Psoas muscle (tissue), 8 donors: ENCODE measurements at regions of chr1 and their contacts with region 1.

Region 1: GRCh38 chr1:160261893-160262794 is at the start of gene DCAF8:
- DNase-seq: peak; percentile 99
- ATAC-seq: peak; percentile 94 to 97 (median 95)
- H3K4me3 ChIP-seq: peak within 1 kb of the TSS; percentile 80
- H3K27ac ChIP-seq: peak within 1 kb of the TSS; percentile 99
- H3K4me1 ChIP-seq: peaks cover 39% of the 10 kb centered on the region
- H3K27me3 ChIP-seq: no peaks in the 10 kb centered on the region
- CTCF ChIP-seq: no peak
- total RNA-seq, gene DCAF8: 135 to 204 (median 188) TPM

Region 2: DNA sequence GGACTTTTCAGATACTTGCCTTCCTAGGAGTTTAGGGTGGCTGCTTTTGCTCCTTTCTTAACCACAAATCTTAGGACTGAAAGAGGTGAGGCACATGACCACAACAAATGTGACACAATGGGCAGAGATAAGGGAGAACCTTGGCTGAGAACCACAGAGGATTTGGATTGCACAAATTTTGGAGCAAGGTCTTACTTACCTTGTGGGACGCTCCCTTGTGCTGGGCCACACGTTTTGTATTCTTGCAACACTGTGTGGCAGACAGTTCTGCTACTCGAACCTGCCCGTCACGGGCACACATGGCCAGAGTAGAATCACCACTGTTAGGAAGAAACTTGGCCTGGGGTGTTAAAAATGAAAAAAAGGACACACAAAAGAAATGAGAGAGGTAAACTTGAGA is 23.7 kb before region 1 on chr1:
- intact Hi-C with region 1: no loop called
- DNase-seq: no peak
- ATAC-seq: peak; percentile 53 to 83 (median 78)
- H3K4me3 ChIP-seq: no peak overlapping the region
- H3K27ac ChIP-seq: peak overlapping the region; percentile 50
- H3K4me1 ChIP-seq: peaks cover 34% of the 10 kb centered on the region
- H3K27me3 ChIP-seq: no peaks in the 10 kb centered on the region
- CTCF ChIP-seq: no peak

Region 3: DNA sequence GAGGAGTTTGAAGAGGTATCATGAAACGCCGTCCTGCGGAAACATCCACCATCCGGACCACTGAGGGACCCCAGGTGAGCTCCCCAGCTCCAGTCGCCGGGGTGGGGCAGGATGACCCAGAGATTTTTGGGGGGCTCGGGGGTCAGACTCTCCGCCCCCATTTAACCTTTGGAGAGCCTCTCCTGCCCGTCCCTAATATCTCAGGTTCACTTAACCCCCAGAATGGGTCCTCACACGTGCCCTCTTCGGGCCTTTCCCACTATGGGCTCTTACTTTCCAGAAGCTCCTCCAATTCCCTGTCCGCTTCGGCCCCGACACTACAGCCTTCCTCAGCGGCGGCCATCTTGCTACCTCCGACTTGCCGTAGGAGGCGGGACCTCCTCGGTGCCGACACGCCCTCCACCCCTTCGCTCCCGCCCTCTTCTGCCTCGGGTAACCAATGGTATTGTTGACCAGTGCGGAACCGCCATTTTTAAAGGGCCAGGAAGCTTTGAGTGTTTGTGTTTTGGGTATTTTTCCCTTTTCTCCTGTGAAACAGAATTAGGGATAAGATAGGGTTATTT is 22.7 kb after region 1 on chr1 and contains the start of gene PEX19:
- intact Hi-C with region 1: loop called in 1 of 2 experiments (anchors 2 kb)
- DNase-seq: peak; percentile 93 to 96
- ATAC-seq: peak; percentile 99 to 100 (median 100)
- H3K4me3 ChIP-seq: peak within 1 kb of the TSS; percentile 98
- H3K27ac ChIP-seq: peak within 1 kb of the TSS; percentile 91
- H3K4me1 ChIP-seq: peaks cover 18% of the 10 kb centered on the region
- H3K27me3 ChIP-seq: no peaks in the 10 kb centered on the region
- CTCF ChIP-seq: no peak
- total RNA-seq, gene PEX19: 75.3 to 85.4 (median 78.2) TPM